ENCODE measurements at regions of chr2 and their contacts with region 1.

Region 1: GRCh38 chr2:37414470-37414949 is 70.1 kb downstream of the QPCT start:
- DNase-seq: peak; percentile 20
- H3K4me3 Mint-ChIP-seq: no peak overlapping the region
- H3K27ac Mint-ChIP-seq: no peak overlapping the region
- H3K4me1 Mint-ChIP-seq: peaks cover 4% of the 10 kb centered on the region
- H3K27me3 Mint-ChIP-seq: no peaks in the 10 kb centered on the region

Region 2: GRCh38 chr2:37080266-37080665 is 334.2 kb before region 1 on chr2:
- CTCF ChIA-PET with region 1: no interaction called
- POLR2A ChIA-PET with region 1: no interaction called
- DNase-seq: no peak
- H3K4me3 Mint-ChIP-seq: peak overlapping the region; percentile 48
- H3K27ac Mint-ChIP-seq: peak overlapping the region; percentile 76
- H3K4me1 Mint-ChIP-seq: peaks cover 52% of the 10 kb centered on the region
- H3K27me3 Mint-ChIP-seq: no peaks in the 10 kb centered on the region

Region 3: DNA sequence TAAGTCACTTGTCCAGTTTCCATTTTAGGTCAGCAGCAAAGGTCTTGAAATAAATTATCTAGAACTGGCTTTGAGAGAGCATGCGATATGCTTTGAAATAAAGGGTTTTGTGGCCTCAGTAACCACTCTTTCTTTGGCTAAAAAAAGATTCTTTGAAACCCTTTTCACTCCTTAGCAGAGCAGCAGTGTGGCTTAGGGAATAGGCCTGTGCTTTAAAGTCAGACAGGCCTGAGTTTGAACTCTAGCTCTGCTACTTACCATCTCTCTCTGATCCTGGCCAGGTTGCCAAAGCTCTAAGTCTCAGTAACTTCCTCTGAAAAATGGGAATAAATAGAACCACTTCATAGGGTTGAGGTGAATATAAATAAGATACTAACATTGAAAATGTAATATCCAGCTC is 17.3 kb before region 1 on chr2:
- CTCF ChIA-PET with region 1: interaction called, 22 read pairs
- POLR2A ChIA-PET with region 1: no interaction called
- DNase-seq: no peak
- H3K4me3 Mint-ChIP-seq: no peak overlapping the region
- H3K27ac Mint-ChIP-seq: no peak overlapping the region
- H3K4me1 Mint-ChIP-seq: peaks cover 2% of the 10 kb centered on the region
- H3K27me3 Mint-ChIP-seq: peaks cover 25% of the 10 kb centered on the region

Region 4: GRCh38 chr2:37443082-37443481 is 28.6 kb after region 1 on chr2:
- CTCF ChIA-PET with region 1: no interaction called
- POLR2A ChIA-PET with region 1: no interaction called
- DNase-seq: no peak
- H3K4me3 Mint-ChIP-seq: no peak overlapping the region
- H3K27ac Mint-ChIP-seq: no peak overlapping the region
- H3K4me1 Mint-ChIP-seq: no peaks in the 10 kb centered on the region
- H3K27me3 Mint-ChIP-seq: peaks cover 16% of the 10 kb centered on the region

Region 5: GRCh38 chr2:37832590-37833197 is 418.2 kb after region 1 on chr2:
- CTCF ChIA-PET with region 1: interaction called, 18 read pairs
- POLR2A ChIA-PET with region 1: no interaction called
- DNase-seq: peak; percentile 85
- H3K4me3 Mint-ChIP-seq: no peak overlapping the region
- H3K27ac Mint-ChIP-seq: no peak overlapping the region
- H3K4me1 Mint-ChIP-seq: peaks cover 14% of the 10 kb centered on the region
- H3K27me3 Mint-ChIP-seq: no peaks in the 10 kb centered on the region

Region 6: DNA sequence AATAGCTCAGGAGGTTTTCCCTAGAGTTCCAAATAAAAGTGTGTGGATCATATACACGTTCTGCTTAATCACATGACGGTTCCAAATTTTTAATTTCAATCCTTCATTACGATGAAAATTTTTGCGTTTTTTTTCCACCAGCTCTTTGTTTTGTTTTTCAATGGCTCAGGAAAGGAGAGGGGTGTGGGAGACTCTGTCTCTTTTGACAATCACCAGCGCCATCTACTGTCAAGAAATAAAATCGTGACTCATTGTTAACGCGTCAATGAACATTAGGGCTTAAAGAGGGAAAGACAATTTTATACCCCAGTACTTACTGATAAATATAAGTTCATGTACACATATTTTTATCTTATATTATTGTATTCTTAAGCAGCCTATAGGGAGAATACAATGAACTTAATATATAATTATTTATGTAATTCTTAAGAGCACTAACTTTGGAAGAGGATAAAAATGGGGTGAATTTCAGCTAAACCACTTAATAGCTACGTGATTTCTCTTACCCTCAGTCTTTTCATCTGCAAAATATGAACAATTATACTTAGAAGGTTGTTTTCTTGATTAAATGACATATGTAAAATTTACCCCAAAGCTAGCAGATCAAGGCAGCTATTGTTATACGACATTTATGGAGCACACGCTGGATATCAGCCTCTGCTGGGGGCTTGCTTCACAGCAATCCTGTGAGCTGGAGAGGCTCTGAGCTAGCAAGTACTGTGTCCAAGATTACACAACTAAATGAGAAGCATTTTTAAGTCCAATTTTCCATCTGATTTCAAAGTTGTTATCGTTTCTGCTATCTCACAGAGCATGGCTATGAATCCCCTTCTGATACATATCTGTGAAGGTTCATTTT is 463.2 kb after region 1 on chr2:
- CTCF ChIA-PET with region 1: interaction called, 16 read pairs
- POLR2A ChIA-PET with region 1: no interaction called
- DNase-seq: peak; percentile 61
- H3K4me3 Mint-ChIP-seq: no peak overlapping the region
- H3K27ac Mint-ChIP-seq: no peak overlapping the region
- H3K4me1 Mint-ChIP-seq: peaks cover 7% of the 10 kb centered on the region
- H3K27me3 Mint-ChIP-seq: peaks cover 17% of the 10 kb centered on the region

Measured in activated CD4-positive, alpha-beta T cell treated with anti-CD3 and anti-CD28 coated beads, Interleukin-2, amount 10 ng/mL, durations not matched to agents 7 days and 5 days (primary cell).